ENCODE measurements at regions of chr9 and their contacts with region 1.

Region 1: GRCh38 chr9:127785023-127785932 is 556 bp upstream of the CDK9 start:
- DNase-seq: peak; percentile 89
- H3K4me3 ChIP-seq: peak overlapping the region in 1 of 3 experiments; percentile 89
- H3K27ac ChIP-seq: peak overlapping the region; percentile 69
- H3K4me1 ChIP-seq: peaks cover 44% of the 10 kb centered on the region
- H3K27me3 ChIP-seq: no peaks in the 10 kb centered on the region
- CTCF ChIP-seq: peak; percentile 64 to 88
- POLR2A ChIP-seq: peak; percentile 24

Region 2: GRCh38 chr9:127611899-127612790 is 173.1 kb before region 1 on chr9 and contains the start of gene STXBP1:
- CTCF ChIA-PET with region 1: interaction called, 3 read pairs
- POLR2A ChIA-PET with region 1: no interaction called
- dilution Hi-C with region 1: no loop called
- intact Hi-C with region 1: loop called (anchors 1 kb)
- DNase-seq: peak; percentile 82
- H3K4me3 ChIP-seq: peak within 1 kb of the TSS; percentile 59 to 82 (median 79)
- H3K27ac ChIP-seq: no peak within 1 kb of the TSS
- H3K4me1 ChIP-seq: peaks cover 20% of the 10 kb centered on the region
- H3K27me3 ChIP-seq: peaks cover 2 to 3% of the 10 kb centered on the region in 2 experiments
- CTCF ChIP-seq: peak in 1 of 2 donors; percentile 28
- POLR2A ChIP-seq: peak; percentile 85
- total RNA-seq, gene STXBP1: 50.5 and 51.3 TPM in 2 replicates

Region 3: GRCh38 chr9:127763918-127764384 is 21.3 kb before region 1 on chr9:
- CTCF ChIA-PET with region 1: interaction called, 167 read pairs
- POLR2A ChIA-PET with region 1: interaction called, 5 read pairs
- dilution Hi-C with region 1: no loop called
- intact Hi-C with region 1: loop called (anchors 1 kb)
- DNase-seq: peak; percentile 85
- H3K4me3 ChIP-seq: no peak overlapping the region
- H3K27ac ChIP-seq: peak overlapping the region; percentile 95
- H3K4me1 ChIP-seq: peaks cover 74% of the 10 kb centered on the region
- H3K27me3 ChIP-seq: no peaks in the 10 kb centered on the region
- CTCF ChIP-seq: peak; percentile 64 to 74
- POLR2A ChIP-seq: peak; percentile 92

Region 4: DNA sequence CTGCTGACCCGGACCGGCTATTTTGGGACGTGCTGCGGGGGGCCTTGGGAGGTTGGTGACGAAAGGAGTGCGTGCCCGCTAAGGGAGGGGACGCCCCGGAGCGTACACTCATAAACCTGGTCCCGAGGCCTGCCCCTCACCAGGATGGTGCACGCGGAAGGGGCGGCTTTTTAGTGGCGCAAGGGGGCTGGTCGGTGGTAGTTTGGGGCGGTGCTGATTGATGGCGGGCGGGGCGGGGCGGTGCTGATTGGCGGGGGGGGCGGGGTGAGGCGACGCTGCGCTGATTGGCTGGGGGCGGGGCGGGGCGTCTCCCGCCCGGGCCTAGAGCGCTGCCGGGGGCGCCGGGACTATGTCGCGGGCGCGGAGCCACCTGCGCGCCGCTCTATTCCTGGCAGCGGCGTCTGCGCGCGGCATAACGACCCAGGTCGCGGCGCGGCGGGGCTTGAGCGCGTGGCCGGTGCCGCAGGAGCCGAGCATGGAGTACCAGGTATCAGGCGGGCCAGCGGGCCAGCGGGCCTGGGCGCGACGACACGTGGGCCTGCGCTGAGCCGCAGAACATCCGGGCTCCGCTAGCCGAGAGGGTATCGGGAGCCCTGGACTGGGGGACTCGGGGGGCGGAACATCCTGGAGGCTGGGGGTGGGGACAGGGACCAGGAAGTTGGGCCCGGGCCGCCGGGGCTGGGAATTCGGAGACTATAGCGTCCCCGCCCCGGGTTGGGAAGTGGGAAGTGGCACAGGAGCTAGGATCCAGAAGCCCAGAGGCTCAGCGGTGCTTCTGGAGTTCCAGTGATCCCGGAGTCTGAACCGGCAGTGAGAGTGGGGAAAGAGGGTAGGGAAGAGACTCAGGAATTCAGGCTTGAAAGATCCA is 17.5 kb after region 1 on chr9 and contains the start of gene FPGS:
- CTCF ChIA-PET with region 1: interaction called, 3 read pairs
- POLR2A ChIA-PET with region 1: no interaction called
- dilution Hi-C with region 1: no loop called
- intact Hi-C with region 1: loop called (anchors 1 kb)
- DNase-seq: peak; percentile 86
- H3K4me3 ChIP-seq: peak within 1 kb of the TSS; percentile 71 to 80 (median 79)
- H3K27ac ChIP-seq: peak within 1 kb of the TSS; percentile 83
- H3K4me1 ChIP-seq: peaks cover 19% of the 10 kb centered on the region
- H3K27me3 ChIP-seq: no peaks in the 10 kb centered on the region
- CTCF ChIP-seq: peak in 1 of 2 donors; percentile 1
- POLR2A ChIP-seq: peak; percentile 69
- total RNA-seq, gene FPGS: 90.2 and 90.7 TPM in 2 replicates

Region 5: GRCh38 chr9:127876764-127877562 is 91.7 kb after region 1 on chr9:
- CTCF ChIA-PET with region 1: no interaction called
- POLR2A ChIA-PET with region 1: no interaction called
- dilution Hi-C with region 1: no loop called
- intact Hi-C with region 1: no loop called
- DNase-seq: peak; percentile 18
- H3K4me3 ChIP-seq: peak overlapping the region; percentile 23 to 55 (median 44)
- H3K27ac ChIP-seq: peak overlapping the region; percentile 26
- H3K4me1 ChIP-seq: peaks cover 14% of the 10 kb centered on the region
- H3K27me3 ChIP-seq: no peaks in the 10 kb centered on the region
- CTCF ChIP-seq: no peak
- POLR2A ChIP-seq: no peak